Lower leg skin (tissue), 4 donors: ENCODE measurements at regions of chr11 and their contacts with region 1.

Region 1: DNA sequence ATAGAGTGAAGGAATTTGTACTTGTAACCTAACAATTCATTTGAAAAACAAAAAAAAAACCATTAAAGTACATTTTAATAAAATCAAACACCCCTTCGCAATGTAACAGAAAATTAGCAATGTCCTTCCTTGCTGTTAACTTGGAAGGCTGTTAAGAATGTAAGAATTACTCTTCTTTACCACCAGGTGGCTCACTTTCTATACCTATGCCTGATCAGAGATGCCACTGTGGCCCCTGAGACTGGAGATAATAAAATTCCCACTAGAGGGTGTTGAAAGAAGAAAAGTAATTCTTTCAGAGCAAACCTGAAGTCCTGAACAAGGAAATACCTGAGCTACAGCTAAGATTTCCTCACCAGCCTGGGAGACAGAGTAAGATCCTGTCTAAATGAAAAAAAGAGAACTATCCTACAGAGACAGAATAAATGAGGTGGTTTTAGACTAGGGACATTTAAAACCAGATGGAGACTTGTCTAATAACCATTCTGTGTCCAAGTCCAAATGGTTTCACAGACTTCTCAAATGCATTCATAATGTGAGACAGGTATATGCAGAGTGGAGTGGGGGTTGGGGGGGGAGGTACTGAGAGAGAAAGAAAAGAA is 1089.3 kb downstream of the FAM181B start:
- DNase-seq: no peak
- H3K4me3 ChIP-seq: no peak overlapping the region
- CTCF ChIP-seq: no peak
- POLR2A ChIP-seq: no peak

Region 2: DNA sequence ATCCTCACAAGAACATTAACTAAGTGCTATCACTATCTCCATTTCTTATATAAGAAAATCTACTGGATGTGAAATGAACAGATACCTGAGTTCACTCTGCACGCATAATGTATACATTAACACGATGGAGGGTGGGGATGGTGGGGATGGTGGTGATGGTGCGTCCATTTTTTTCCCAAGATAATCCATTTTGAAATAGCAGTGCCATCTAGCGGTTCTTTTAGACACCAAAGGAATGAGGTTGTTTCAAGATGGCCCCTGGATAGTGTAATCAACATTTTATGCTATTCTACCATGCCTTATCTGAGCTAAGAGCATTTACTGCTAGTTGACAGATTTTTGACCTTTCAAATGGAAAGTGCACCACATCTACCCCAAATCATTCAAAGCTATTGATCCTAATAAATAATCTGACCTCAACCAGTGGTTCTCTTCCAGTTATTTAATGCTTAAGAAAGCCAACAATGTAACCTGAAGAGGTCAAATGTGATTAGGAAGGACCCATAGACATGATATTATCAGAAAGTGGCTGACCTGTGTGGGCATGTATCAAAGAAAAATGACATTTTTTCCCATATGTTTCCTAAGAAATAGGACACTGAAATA is 1488.8 kb before region 1 on chr11:
- intact Hi-C with region 1: no loop called
- DNase-seq: no peak
- H3K4me3 ChIP-seq: no peak overlapping the region
- CTCF ChIP-seq: no peak
- POLR2A ChIP-seq: no peak

Region 3: DNA sequence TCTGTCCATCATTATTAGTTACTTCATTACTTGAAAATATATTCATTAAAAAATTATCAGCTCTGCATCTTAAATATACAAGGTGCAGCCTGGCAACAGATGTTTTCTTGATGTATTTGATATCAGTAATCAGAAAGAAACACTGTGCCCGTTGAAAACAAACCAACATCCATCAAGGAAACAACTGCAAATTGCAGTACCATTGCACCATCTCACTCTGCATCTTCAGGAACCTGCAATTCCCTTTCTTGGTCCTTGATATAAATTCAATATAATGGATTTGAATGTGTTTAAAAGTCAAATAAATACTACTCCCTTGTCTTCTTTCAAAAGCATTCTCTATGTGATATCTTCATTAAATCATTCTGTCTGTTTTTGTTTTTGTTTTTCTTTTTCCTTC is 41.8 kb before region 1 on chr11:
- intact Hi-C with region 1: no loop called
- DNase-seq: no peak
- H3K4me3 ChIP-seq: no peak overlapping the region
- CTCF ChIP-seq: no peak
- POLR2A ChIP-seq: no peak

Region 4: GRCh38 chr11:82698576-82699352 is 1054.4 kb after region 1 on chr11:
- intact Hi-C with region 1: loop called (anchors 10 kb)
- DNase-seq: no peak
- H3K4me3 ChIP-seq: no peak overlapping the region
- CTCF ChIP-seq: no peak
- POLR2A ChIP-seq: no peak